ENCODE measurements at regions of chr17 and their contacts with region 1.

Region 1: DNA sequence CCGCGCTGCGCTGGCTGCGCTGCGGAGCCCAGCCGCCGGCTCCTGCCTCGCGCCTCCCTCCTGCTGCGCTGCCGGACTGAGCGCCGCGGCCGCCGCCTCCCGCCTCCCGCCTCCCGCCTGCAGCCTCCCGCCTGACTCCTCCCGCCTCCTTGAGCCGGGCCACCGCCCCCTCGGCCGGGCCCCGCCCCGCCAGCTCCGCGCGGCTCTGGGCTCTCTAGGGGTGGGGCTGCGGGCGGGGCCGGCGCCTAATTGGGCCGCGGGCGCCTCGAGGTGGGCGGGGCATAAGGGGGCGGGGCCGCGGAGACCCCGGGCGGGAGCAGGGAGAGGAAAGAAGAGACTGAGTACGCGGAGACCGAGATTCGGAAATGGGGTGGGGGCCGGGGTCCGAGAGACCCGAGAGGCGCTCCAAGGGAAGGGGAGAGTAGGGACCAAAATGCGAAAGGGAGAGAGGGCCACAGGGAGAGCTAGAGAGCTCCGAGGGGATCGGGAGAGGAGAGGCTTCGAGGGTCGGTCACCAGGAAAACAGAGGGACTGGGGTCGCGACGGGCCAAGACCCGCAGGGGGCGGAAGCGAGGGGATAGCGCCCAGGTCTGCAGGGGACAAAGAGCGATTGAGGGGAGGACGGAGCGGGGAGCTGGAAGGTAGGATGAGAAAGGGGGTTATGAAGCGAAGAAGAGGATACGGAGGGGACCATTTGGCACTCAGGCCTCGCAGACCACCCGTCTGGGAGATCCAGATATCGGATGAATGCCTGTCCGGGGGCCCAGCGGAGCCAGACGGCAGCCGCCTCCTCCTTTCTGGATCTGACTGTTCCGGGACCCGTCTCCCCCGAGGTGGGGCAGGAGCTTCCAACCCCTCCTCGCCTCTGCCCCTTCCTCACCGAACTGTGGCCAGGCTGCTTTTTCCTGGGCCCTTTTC is at the start of gene C1QL1:
- DNase-seq: peak; percentile 86
- H3K4me3 Mint-ChIP-seq: peak within 1 kb of the TSS; percentile 59
- H3K27ac Mint-ChIP-seq: no peak within 1 kb of the TSS
- H3K4me1 Mint-ChIP-seq: peaks cover 44% of the 10 kb centered on the region
- H3K27me3 Mint-ChIP-seq: peaks cover 51% of the 10 kb centered on the region
- total RNA-seq, gene C1QL1: 0.36 to 0.40 TPM

Region 2: DNA sequence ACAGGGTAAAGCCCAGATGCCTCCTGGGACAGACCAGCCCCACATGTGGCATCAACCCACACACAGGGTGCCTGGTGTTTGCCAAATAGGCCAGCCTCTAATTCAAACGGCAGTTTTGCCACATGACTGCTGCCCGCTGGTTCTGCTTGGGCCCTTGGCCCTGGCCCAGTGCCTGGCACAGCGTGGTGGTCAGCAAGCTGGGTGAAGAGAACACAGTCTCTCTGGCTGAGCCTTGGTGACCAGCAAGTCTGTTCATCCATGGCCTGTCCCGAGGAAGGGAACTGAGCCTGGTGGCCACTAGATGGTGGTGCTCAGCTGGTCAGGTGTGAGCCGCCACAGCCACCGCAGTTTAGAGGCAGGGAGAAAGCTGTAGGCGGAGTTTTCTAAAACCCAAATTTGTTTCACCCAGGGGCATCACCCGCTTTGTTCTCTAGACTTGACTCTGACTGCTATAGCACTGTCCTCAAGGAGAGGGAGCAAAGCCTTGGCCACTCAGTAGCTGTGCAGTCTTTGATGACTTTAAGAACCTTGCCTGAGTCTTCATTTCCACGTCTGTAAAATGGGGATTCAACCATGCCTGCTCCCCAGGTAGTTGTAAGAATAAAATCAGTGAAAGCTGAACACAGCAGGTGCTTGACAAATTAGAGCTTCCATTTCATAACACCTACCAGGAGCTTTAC is 48.5 kb before region 1 on chr17:
- CTCF ChIA-PET with region 1: interaction called, 15 read pairs
- intact Hi-C with region 1: loop called (anchors 1 kb)
- DNase-seq: peak; percentile 84
- H3K4me3 Mint-ChIP-seq: no peak overlapping the region
- H3K27ac Mint-ChIP-seq: no peak overlapping the region
- H3K4me1 Mint-ChIP-seq: no peaks in the 10 kb centered on the region
- H3K27me3 Mint-ChIP-seq: peaks cover 18% of the 10 kb centered on the region

Region 3: DNA sequence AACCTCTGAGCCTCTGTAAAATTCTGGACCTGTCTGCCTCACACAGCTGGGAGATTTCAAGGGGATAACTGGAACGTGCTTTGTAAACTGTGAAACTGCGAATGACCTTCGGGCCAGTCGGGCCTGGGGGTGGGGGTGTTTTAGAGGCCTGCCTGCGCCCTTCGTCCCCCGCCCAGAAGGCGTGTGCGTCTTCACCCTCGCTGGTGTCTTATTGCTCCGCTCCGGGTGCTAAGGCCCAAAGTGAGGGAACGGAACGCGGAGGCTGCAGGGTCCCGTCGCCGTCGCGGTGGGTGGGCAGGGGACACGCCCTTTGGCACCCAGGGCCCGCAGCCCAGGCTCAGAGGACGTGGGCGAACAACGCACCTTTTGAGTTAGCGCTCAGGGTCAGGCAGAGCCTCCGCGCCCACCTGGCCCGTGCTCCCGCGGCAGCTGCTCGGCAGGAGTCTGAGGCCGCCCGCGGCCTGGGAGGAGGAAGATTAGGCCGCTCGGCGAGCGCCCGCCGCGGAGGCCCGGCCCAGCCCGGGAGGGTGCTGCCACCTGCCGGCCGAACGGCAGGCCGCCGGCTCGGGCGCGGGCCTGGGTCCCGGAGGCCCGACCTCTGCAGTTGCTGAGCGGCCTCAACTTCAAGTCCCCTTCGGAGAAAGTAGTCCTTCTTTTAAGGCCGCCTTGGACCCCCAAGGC is 53.3 kb after region 1 on chr17:
- CTCF ChIA-PET with region 1: interaction called, 5 read pairs
- intact Hi-C with region 1: loop called (anchors 2 kb)
- DNase-seq: peak; percentile 61
- H3K4me3 Mint-ChIP-seq: no peak overlapping the region
- H3K27ac Mint-ChIP-seq: no peak overlapping the region
- H3K4me1 Mint-ChIP-seq: peaks cover 16% of the 10 kb centered on the region
- H3K27me3 Mint-ChIP-seq: peaks cover 34% of the 10 kb centered on the region

Region 4: DNA sequence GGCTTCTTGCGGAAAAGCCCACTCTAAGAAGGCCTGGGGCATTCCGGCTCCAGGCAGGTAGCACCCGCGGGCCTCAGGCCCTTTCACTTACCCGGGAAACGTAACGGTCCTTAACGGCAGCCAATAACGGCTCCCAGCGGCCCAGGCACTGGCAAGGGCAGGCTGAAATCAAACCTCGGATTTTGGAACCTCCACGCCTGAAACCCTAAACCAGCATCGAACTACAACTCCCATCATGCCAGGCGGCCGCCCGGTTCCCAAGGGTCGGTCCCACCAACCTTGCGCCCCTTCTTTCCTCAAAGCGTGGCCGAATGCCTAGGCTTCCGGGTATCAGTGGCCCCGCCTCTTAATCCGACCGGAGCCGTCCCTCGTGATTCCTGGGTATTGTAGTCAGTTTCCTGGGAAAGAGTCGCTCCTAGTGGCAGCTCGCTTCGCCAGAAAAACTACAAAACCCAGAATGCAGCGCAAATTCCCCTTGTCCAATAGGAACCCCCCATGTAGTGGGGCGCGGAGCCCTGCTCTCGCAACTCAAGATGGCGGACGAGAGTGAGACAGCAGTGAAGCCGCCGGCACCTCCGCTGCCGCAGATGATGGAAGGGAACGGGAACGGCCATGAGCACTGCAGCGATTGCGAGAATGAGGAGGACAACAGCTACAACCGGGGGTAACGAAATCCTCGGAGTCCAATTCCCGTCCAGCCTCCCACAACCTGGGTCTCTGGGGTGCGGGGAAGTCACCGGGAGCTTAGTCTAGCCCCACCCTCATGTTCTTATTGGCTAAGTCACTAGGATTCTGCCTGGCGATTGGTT is 92.5 kb after region 1 on chr17 and contains the start of gene NMT1:
- CTCF ChIA-PET with region 1: no interaction called
- intact Hi-C with region 1: loop called (anchors 1 kb)
- DNase-seq: peak; percentile 99
- H3K4me3 Mint-ChIP-seq: peak within 1 kb of the TSS; percentile 87
- H3K27ac Mint-ChIP-seq: peak within 1 kb of the TSS; percentile 93
- H3K4me1 Mint-ChIP-seq: peaks cover 47% of the 10 kb centered on the region
- H3K27me3 Mint-ChIP-seq: no peaks in the 10 kb centered on the region
- total RNA-seq, gene NMT1: 234 to 235 TPM

Region 5: DNA sequence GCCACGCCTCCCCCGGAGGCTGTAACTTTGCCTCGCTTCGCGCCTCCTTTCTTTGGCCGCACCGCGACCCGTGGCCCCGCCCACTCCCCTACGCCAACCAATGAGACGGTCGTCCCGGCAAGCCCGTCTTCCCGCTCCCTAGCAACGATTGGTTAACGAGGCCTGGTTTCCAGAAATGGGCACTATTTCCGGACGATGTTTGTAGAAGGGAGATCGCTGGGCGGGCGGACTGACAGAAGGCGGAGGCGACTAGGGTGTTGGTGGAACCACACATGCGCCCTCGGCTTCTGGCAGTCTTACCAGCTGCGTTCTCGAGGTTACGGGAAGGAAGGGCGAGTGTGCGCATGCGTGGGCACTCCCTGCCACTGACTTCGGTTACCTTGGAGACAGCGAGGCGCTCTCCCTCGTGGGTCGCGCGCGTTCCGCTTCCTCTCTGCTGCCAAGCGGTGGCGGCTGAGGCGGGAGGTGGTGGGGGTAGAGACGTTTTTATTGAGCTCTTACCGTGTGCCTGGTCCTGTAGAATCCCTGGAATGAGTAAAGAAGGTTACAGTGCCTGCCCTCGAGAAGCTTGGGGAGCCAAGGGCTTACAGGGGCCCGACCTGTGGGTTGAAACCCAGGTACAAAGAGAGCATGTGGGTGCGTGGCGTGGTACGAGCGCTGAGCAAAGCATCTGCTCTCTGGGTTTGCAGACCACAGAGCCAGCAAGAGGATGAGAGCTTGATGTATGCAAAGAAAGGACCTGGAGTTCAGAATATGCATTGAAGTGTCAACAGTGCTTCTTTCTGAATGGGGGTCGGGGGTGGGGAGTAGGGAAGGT is 348.8 kb after region 1 on chr17:
- CTCF ChIA-PET with region 1: no interaction called
- intact Hi-C with region 1: loop called (anchors 5 kb)
- DNase-seq: peak; percentile 100
- H3K4me3 Mint-ChIP-seq: peak overlapping the region; percentile 85
- H3K27ac Mint-ChIP-seq: peak overlapping the region; percentile 86
- H3K4me1 Mint-ChIP-seq: peaks cover 67% of the 10 kb centered on the region
- H3K27me3 Mint-ChIP-seq: no peaks in the 10 kb centered on the region